ENCODE measurements at regions of chr11 and their contacts with region 1.

Region 1: GRCh38 chr11:34916015-34916842 is at the starts of genes APIP and PDHX:
- DNase-seq: peak; percentile 77 to 97 (median 83)
- ATAC-seq: peak; percentile 94
- H3K4me3 ChIP-seq: peak within 1 kb of the TSS; percentile 87
- H3K4me3 Mint-ChIP-seq: peak within 1 kb of the TSS; percentile 90 to 99 (median 96)
- H3K27ac ChIP-seq: peak within 1 kb of the TSS; percentile 92
- H3K27ac Mint-ChIP-seq: peak within 1 kb of the TSS; percentile 86 to 98 (median 95)
- H3K4me1 ChIP-seq: peaks cover 9 to 18% of the 10 kb centered on the region in 2 donors
- H3K4me1 Mint-ChIP-seq: peaks cover 36 to 71% (median 57%) of the 10 kb centered on the region in 7 donors
- H3K27me3 ChIP-seq: no peaks in the 10 kb centered on the region
- H3K27me3 Mint-ChIP-seq: no peaks in the 10 kb centered on the region
- total RNA-seq, gene APIP: 8.2 to 23.6 (median 17.7) TPM
- total RNA-seq, gene PDHX: 20.0 to 54.1 (median 28.8) TPM

Region 2: GRCh38 chr11:33039274-33040032 is 1876.8 kb before region 1 on chr11 and contains the start of gene TCP11L1:
- CTCF ChIA-PET with region 1: no interaction called
- POLR2A ChIA-PET with region 1: no interaction called
- intact Hi-C with region 1: loop called in 1 of 2 experiments (anchors 1 kb)
- DNase-seq: peak; percentile 57 to 88 (median 76)
- ATAC-seq: peak; percentile 93
- H3K4me3 ChIP-seq: peak within 1 kb of the TSS; percentile 100
- H3K4me3 Mint-ChIP-seq: peak within 1 kb of the TSS; percentile 91 to 97 (median 94)
- H3K27ac ChIP-seq: peak within 1 kb of the TSS; percentile 82
- H3K27ac Mint-ChIP-seq: peak within 1 kb of the TSS; percentile 77 to 95 (median 92)
- H3K4me1 ChIP-seq: peaks cover 3 to 9% of the 10 kb centered on the region in 2 donors
- H3K4me1 Mint-ChIP-seq: peaks cover 0 to 17% (median 14%) of the 10 kb centered on the region in 7 donors
- H3K27me3 ChIP-seq: no peaks in the 10 kb centered on the region
- H3K27me3 Mint-ChIP-seq: peaks cover 0 to 17% (median 0%) of the 10 kb centered on the region in 5 donors
- total RNA-seq, gene TCP11L1: 9.1 to 17.1 (median 13.3) TPM

Region 3: GRCh38 chr11:34051349-34052035 is 864.7 kb before region 1 on chr11 and contains the start of gene CAPRIN1:
- CTCF ChIA-PET with region 1: no interaction called
- POLR2A ChIA-PET with region 1: no interaction called
- intact Hi-C with region 1: loop called (anchors 1 to 2 kb)
- DNase-seq: peak; percentile 78 to 92 (median 89)
- ATAC-seq: peak; percentile 87
- H3K4me3 ChIP-seq: peak within 1 kb of the TSS; percentile 95
- H3K4me3 Mint-ChIP-seq: peak within 1 kb of the TSS; percentile 94 to 99 (median 98)
- H3K27ac ChIP-seq: peak within 1 kb of the TSS; percentile 99
- H3K27ac Mint-ChIP-seq: peak within 1 kb of the TSS; percentile 94 to 99 (median 97)
- H3K4me1 ChIP-seq: peaks cover 21 to 27% of the 10 kb centered on the region in 2 donors
- H3K4me1 Mint-ChIP-seq: peaks cover 3 to 42% (median 30%) of the 10 kb centered on the region in 7 donors
- H3K27me3 ChIP-seq: no peaks in the 10 kb centered on the region
- H3K27me3 Mint-ChIP-seq: peaks cover 0 to 6% (median 0%) of the 10 kb centered on the region in 5 donors
- total RNA-seq, gene CAPRIN1: 120 to 227 (median 163) TPM

Region 4: GRCh38 chr11:34438529-34439507 is 477.4 kb before region 1 on chr11 and contains the start of gene CAT:
- CTCF ChIA-PET with region 1: no interaction called
- POLR2A ChIA-PET with region 1: no interaction called
- intact Hi-C with region 1: loop called (anchors 1 kb)
- DNase-seq: peak; percentile 94 to 98 (median 97)
- ATAC-seq: peak; percentile 98
- H3K4me3 ChIP-seq: peak within 1 kb of the TSS; percentile 90
- H3K4me3 Mint-ChIP-seq: peak within 1 kb of the TSS; percentile 88 to 98 (median 96)
- H3K27ac ChIP-seq: peak within 1 kb of the TSS; percentile 79
- H3K27ac Mint-ChIP-seq: peak within 1 kb of the TSS; percentile 89 to 97 (median 93)
- H3K4me1 ChIP-seq: peaks cover 7 to 19% of the 10 kb centered on the region in 2 donors
- H3K4me1 Mint-ChIP-seq: peaks cover 21 to 47% (median 35%) of the 10 kb centered on the region in 7 donors
- H3K27me3 ChIP-seq: no peaks in the 10 kb centered on the region
- H3K27me3 Mint-ChIP-seq: no peaks in the 10 kb centered on the region
- total RNA-seq, gene CAT: 23.3 to 55.9 (median 42.6) TPM

Region 5: DNA sequence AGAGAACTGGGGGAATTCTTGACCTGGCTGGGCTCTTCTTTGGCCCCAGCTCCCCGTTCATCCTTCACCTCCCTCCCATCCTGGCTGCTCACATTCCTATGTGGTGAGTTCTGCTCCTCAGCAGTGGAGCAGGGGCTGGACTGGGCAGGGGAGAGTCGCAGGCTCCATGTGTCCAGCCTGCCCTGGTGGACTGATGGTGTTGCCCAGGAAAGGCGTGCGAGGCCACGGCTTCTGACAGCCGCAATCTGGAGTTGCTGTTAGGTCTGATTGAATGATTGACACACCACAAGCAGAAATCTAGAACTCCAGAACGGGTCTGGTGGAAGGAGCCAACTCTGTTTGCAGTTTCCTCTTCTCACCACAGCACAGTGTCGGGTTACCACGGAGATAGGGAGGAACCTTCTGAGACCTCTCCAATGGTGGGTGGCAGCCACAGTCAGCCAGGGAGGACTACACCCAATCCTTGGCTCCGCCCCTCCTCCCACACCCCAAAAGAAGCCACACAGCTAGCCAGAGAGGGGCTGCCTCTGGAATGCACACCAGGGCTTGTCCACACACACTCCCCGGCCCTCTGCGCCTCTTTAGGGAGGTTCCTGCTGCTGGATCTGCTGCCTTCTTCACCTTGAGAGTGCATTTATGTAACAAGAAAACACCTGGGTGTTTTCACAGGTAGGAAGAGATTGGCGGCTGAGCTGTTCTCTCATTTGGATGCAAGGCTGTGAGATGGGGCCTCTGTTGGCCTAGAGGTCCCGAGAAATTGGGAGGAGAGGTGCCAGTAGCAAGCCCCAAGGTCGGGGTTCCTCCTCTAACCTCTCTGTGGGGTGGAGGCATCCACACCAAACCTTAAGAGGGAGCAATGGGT is 166.3 kb after region 1 on chr11:
- CTCF ChIA-PET with region 1: no interaction called
- POLR2A ChIA-PET with region 1: interaction called, 3 read pairs
- intact Hi-C with region 1: loop called in 1 of 2 experiments (anchors 2 kb)
- DNase-seq: peak; percentile 76 to 94 (median 92)
- ATAC-seq: peak; percentile 86
- H3K4me3 ChIP-seq: peak overlapping the region; percentile 55
- H3K4me3 Mint-ChIP-seq: peak overlapping the region; percentile 78 to 89 (median 86)
- H3K27ac ChIP-seq: peak overlapping the region; percentile 95
- H3K27ac Mint-ChIP-seq: peak overlapping the region; percentile 89 to 100 (median 99)
- H3K4me1 ChIP-seq: peaks cover 64 to 78% of the 10 kb centered on the region in 2 donors
- H3K4me1 Mint-ChIP-seq: peaks cover 61 to 100% (median 95%) of the 10 kb centered on the region in 7 donors
- H3K27me3 ChIP-seq: no peaks in the 10 kb centered on the region
- H3K27me3 Mint-ChIP-seq: no peaks in the 10 kb centered on the region

Region 6: GRCh38 chr11:35343033-35343598 is 426.9 kb after region 1 on chr11:
- CTCF ChIA-PET with region 1: no interaction called
- POLR2A ChIA-PET with region 1: no interaction called
- intact Hi-C with region 1: loop called in 1 of 2 experiments (anchors 1 kb)
- DNase-seq: peak in 8 of 9 donors; percentile 19 to 69 (median 54)
- ATAC-seq: peak; percentile 62
- H3K4me3 ChIP-seq: no peak overlapping the region
- H3K4me3 Mint-ChIP-seq: peak overlapping the region; percentile 33 to 82 (median 66)
- H3K27ac ChIP-seq: peak overlapping the region; percentile 2
- H3K27ac Mint-ChIP-seq: peak overlapping the region; percentile 82 to 91 (median 85)
- H3K4me1 ChIP-seq: peaks cover 3 to 43% of the 10 kb centered on the region in 2 donors
- H3K4me1 Mint-ChIP-seq: peaks cover 29 to 80% (median 59%) of the 10 kb centered on the region in 7 donors
- H3K27me3 ChIP-seq: no peaks in the 10 kb centered on the region
- H3K27me3 Mint-ChIP-seq: peaks cover 0 to 2% (median 0%) of the 10 kb centered on the region in 5 donors